PC-9 (cell line): ENCODE measurements at regions of chr6 and their contacts with region 1.

Region 1: DNA sequence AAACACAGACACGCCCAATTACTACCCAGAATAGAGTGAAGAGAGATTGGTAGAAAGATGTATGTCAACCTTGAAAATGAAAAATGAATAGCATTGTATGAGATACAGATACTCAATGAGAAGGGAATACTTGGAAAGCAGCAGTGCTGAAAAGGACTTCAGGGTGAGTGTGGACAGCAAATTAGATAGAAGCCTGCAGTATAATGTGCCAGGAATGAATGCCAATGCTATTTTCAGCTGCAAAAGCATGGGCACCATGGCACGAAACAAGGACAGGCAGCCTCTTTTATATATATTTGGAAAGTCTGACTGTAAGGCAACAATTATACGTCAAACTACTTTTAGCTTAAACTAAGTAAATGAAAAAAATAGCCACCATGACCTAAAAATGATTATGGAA is 118.2 kb downstream of the PTCHD4 start:
- DNase-seq: no peak
- H3K4me3 ChIP-seq: no peak overlapping the region
- H3K27ac ChIP-seq: no peak overlapping the region
- H3K4me1 ChIP-seq: no peaks in the 10 kb centered on the region
- H3K27me3 ChIP-seq: no peaks in the 10 kb centered on the region
- CTCF ChIP-seq: no peak

Region 2: GRCh38 chr6:47977314-47977713 is 15.5 kb before region 1 on chr6:
- CTCF ChIA-PET with region 1: no interaction called
- POLR2A ChIA-PET with region 1: interaction called, 11 read pairs
- intact Hi-C with region 1: no loop called
- DNase-seq: no peak
- H3K4me3 ChIP-seq: no peak overlapping the region
- H3K27ac ChIP-seq: no peak overlapping the region
- H3K4me1 ChIP-seq: no peaks in the 10 kb centered on the region
- H3K27me3 ChIP-seq: no peaks in the 10 kb centered on the region
- CTCF ChIP-seq: no peak

Region 3: DNA sequence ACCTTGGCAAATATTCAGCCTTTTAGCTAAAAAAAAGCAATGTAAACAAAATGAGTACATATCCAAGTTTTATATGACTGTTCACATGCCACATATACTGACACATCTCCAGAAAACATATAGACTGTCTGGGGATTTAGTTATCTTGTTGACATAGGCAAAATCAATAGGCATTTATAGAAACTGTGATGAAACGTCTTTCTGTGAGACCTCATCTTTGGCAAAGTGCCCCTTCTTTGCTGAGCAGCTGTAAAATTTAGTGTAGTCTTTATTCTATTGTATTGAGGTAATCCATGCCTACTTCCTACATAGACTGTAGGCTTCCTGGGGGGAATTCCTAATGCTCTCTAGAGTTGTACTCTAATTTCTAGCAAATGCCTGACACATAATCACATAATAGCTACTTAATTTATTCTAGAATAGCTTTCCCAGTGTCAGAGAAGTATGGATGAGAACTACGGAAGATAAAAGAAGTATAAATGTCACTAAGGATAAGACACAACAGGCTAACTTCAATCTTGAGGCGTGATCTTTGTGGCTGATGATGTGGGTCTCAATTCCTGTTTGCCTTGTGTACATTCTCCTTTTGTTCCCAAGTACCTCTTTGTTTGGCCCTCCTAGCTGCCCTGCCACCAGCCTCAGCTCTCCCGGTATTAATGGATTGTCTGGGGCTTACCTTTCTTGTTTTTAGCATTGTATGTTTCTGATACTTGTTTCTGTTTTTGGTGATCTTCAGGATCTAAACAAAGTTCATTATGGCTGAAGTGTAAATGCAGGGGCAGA is 87.6 kb after region 1 on chr6:
- CTCF ChIA-PET with region 1: no interaction called
- POLR2A ChIA-PET with region 1: no interaction called
- intact Hi-C with region 1: no loop called
- DNase-seq: no peak
- H3K4me3 ChIP-seq: no peak overlapping the region
- H3K27ac ChIP-seq: no peak overlapping the region
- H3K4me1 ChIP-seq: peaks cover 4% of the 10 kb centered on the region
- H3K27me3 ChIP-seq: no peaks in the 10 kb centered on the region
- CTCF ChIP-seq: no peak